Dorsolateral prefrontal cortex (tissue), 120 donors: ENCODE measurements at regions of chr2 and their contacts with region 1.

Region 1: DNA sequence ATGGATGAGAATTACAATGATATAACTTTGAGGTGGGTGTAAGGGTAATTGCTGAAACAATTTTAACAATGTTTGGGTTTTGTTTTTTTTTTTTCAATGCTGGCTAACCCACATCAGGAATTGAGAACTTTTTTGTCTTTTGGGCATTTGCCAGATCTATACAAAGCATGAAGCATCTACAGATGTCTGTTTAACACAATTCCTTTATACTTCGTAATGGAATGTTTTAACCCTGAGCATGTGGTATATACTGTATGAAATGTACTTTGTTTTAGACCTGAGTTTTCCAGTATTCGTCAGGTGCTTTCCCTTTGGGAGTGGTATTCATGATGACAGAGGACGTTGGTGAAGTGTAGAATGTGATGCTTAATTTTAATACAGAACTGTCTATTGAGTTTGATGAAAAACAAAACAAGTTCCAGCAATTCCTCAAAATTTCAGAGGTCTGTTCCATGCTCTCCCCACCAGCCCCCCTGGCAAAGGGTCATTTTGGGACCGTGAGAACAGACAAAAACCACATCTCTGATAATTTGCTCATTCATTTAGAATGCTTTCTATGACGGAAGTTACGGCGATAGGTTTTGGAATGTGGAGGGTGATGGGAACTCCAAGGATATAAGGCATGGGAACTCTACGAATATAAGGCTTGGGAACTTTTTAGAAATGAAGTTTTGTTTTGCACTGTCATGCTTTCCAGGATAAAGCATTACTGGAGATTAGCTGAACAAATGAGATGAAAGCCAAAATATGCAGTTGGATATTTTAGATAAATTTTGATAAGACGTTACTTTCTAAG is 14.1 kb downstream of the LIMS1 start:
- DNase-seq: no peak
- H3K4me3 ChIP-seq: peak overlapping the region in 1 of 59 donors; percentile 4
- H3K27ac ChIP-seq: no peak overlapping the region
- H3K27me3 ChIP-seq: no peaks in the 10 kb centered on the region
- CTCF ChIP-seq: no peak

Region 2: GRCh38 chr2:108577099-108577498 is 28.7 kb after region 1 on chr2:
- intact Hi-C with region 1: loop called in 1 of 2 experiments (anchors 2 kb)
- DNase-seq: no peak
- H3K4me3 ChIP-seq: no peak overlapping the region
- H3K27ac ChIP-seq: peak overlapping the region in 1 of 59 donors; percentile 19
- H3K27me3 ChIP-seq: no peaks in the 10 kb centered on the region
- CTCF ChIP-seq: no peak

Region 3: DNA sequence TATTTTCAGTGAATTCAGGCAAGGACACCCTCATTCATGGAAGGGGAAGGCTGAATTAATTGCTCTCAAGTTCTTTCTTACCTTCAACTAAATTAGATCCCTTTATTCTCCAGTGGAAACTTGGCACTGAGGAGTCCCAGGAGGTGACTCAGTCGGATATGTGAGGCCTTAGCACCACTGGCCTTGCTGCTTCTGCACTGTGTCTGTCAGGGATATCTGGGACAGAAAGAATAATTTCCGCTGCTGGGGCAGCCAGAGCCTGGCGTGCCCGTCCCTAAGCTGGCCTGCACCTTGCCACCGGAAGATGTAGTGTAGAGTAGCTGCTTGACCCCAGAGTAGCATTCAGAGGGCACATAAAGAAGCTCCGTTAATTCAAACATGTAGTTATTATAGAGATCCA is 39.2 kb after region 1 on chr2:
- intact Hi-C with region 1: no loop called
- DNase-seq: no peak
- H3K4me3 ChIP-seq: no peak overlapping the region
- H3K27ac ChIP-seq: peak overlapping the region in 44 of 59 donors; percentile 0 to 83 (median 50)
- H3K27me3 ChIP-seq: no peaks in the 10 kb centered on the region
- CTCF ChIP-seq: no peak